Common myeloid progenitor, CD34-positive (primary cell): ENCODE measurements at regions of chr12 and their contacts with region 1.

Region 1: DNA sequence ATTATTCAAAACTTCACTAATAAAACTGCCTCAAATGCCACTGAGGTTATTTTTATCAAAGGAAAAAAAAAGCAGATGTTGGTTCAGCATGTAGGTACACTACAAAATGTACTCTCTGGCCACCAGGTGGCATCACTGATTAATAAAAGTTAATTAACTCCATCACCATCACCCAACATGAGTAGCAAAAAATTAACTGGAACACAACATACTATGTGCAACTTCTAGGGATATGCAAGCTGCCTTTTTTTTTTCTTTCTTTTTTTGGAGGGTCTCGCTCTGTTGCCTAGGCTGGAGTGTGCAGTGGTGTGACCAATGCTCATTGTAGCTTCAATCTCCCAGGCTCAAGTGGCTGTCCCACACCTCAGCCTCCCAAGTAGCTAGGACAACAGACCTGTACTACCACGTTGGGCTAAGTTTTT is 43.8 kb upstream of the NR2C1 start:
- DNase-seq: peak; percentile 71 to 87 (median 83)
- H3K4me3 ChIP-seq: no peak overlapping the region
- H3K27ac ChIP-seq: no peak overlapping the region
- H3K4me1 ChIP-seq: no peaks in the 10 kb centered on the region
- H3K27me3 ChIP-seq: no peaks in the 10 kb centered on the region

Region 2: GRCh38 chr12:94969424-94969823 is 147.8 kb before region 1 on chr12:
- CTCF ChIA-PET with region 1: no interaction called
- POLR2A ChIA-PET with region 1: no interaction called
- DNase-seq: no peak
- H3K4me3 ChIP-seq: no peak overlapping the region
- H3K27ac ChIP-seq: no peak overlapping the region
- H3K4me1 ChIP-seq: peaks cover 0 to 11% (median 0%) of the 10 kb centered on the region in 4 experiments
- H3K27me3 ChIP-seq: no peaks in the 10 kb centered on the region

Region 3: DNA sequence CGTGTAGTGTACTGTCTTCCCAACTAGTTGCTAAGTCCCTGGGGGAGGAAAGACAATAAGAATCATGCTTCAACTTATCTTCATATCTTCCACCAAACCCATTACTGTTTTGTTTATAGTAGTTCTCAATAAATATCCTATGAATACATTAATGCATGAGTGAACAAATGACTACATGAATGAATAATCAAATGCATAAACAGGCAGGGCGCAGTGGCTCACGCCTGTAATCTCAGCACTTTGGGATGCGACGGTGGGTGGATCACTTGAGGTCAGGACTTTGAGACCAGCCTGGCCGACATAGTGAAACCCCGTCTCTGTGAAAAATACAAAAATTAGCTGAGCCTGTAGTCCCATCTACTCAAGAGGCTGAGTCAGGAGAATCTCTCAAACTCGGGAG is 11.6 kb before region 1 on chr12:
- CTCF ChIA-PET with region 1: interaction called, 13 read pairs
- POLR2A ChIA-PET with region 1: no interaction called
- DNase-seq: no peak
- H3K4me3 ChIP-seq: no peak overlapping the region
- H3K27ac ChIP-seq: no peak overlapping the region
- H3K4me1 ChIP-seq: no peaks in the 10 kb centered on the region
- H3K27me3 ChIP-seq: no peaks in the 10 kb centered on the region

Region 4: DNA sequence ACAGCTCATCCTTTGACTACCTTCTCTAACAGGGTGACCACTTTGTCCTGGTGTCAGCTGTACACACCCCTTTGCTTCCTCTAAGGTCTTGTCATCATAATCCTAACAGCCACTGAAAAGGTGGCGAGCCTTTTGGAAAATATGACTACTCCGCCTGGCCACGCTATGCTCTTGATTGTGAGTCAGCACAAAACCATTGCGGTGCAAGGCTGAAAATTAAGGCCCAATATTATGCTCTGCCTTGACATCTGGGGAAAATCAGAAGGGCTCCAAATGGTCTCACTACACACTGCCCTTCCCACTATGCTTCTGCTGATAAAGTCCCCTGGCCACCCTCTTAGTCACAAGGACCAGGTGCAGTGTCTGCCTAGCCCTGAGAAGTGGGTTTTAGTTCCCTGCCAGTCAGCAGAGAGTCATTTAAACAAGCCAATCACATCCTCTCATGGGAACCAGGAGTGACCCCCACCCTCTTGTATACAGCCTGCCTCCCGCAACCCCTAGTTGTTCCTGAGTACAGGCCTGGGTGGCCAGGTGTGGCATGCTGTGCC is 65.8 kb after region 1 on chr12:
- CTCF ChIA-PET with region 1: no interaction called
- POLR2A ChIA-PET with region 1: no interaction called
- DNase-seq: no peak
- H3K4me3 ChIP-seq: no peak overlapping the region
- H3K27ac ChIP-seq: no peak overlapping the region
- H3K4me1 ChIP-seq: peaks cover 0 to 24% (median 0%) of the 10 kb centered on the region in 4 experiments
- H3K27me3 ChIP-seq: no peaks in the 10 kb centered on the region

Region 5: GRCh38 chr12:95217377-95218149 is 100.4 kb after region 1 on chr12 and contains the starts of genes FGD6 and VEZT:
- CTCF ChIA-PET with region 1: interaction called, 15 read pairs
- POLR2A ChIA-PET with region 1: no interaction called
- DNase-seq: peak; percentile 99 to 100 (median 99)
- H3K4me3 ChIP-seq: peak within 1 kb of the TSS; percentile 86 to 100 (median 95)
- H3K27ac ChIP-seq: peak within 1 kb of the TSS; percentile 88 to 95
- H3K4me1 ChIP-seq: peaks cover 7 to 30% (median 17%) of the 10 kb centered on the region in 4 experiments
- H3K27me3 ChIP-seq: peaks cover 0 to 2% (median 0%) of the 10 kb centered on the region in 5 experiments

Region 6: DNA sequence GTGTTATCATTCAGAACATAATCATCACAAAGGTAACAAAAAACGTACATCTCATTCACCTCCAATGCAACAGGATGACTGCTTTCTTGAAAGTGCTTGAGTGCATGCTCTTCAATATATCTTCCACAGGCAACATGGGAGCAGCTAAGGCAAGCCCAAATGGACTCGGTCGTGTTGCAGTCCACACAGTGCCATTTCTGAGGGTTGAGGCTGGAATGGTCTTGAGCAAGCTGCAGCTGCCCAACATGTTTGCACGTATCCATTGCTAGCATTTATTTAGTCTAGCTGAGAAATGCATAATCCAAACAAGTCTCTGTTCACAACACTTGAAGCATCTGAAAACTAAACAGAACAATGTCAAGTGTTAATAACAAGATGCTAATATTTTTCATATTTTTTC is 416.8 kb after region 1 on chr12:
- CTCF ChIA-PET with region 1: interaction called, 38 read pairs
- POLR2A ChIA-PET with region 1: no interaction called
- DNase-seq: no peak
- H3K4me3 ChIP-seq: no peak overlapping the region
- H3K27ac ChIP-seq: no peak overlapping the region
- H3K4me1 ChIP-seq: no peaks in the 10 kb centered on the region
- H3K27me3 ChIP-seq: peaks cover 0 to 1% (median 0%) of the 10 kb centered on the region in 5 experiments